Activated CD8-positive, alpha-beta T cell treated with anti-CD3 and anti-CD28 coated beads for 36 hours (primary cell): ENCODE measurements at regions of chr12 and their contacts with region 1.

Region 1: GRCh38 chr12:17853054-17853453 is 236.9 kb downstream of the RERGL start:
- DNase-seq: no peak
- ATAC-seq: no peak
- H3K4me3 Mint-ChIP-seq: no peak overlapping the region
- H3K27ac Mint-ChIP-seq: no peak overlapping the region
- H3K4me1 Mint-ChIP-seq: no peaks in the 10 kb centered on the region
- H3K27me3 Mint-ChIP-seq: no peaks in the 10 kb centered on the region
- CTCF ChIP-seq: no peak

Region 2: DNA sequence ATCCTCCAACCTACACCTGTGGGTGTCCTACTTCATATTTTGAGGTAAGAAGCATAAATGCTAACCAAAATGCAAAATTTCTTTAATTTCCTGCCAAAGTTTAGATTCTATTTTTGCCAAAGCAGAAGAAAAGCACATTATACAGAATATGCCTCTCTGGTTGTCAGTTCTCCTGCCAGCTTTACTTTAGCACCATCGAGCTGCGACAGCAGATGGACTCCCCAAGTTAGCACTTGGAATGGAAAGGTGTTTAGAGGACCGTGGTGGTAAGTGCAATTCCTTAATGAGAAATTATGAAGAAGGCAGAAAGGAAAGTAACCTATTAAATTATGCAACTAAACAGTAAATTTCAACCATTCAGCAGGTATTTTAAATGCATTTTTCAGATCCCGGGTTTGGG is 89.7 kb before region 1 on chr12:
- CTCF ChIA-PET with region 1: no interaction called
- POLR2A ChIA-PET with region 1: no interaction called
- intact Hi-C with region 1: loop called (anchors 5 kb)
- DNase-seq: no peak
- ATAC-seq: no peak
- H3K4me3 Mint-ChIP-seq: no peak overlapping the region
- H3K27ac Mint-ChIP-seq: no peak overlapping the region
- H3K4me1 Mint-ChIP-seq: no peaks in the 10 kb centered on the region
- H3K27me3 Mint-ChIP-seq: no peaks in the 10 kb centered on the region
- CTCF ChIP-seq: no peak

Region 3: DNA sequence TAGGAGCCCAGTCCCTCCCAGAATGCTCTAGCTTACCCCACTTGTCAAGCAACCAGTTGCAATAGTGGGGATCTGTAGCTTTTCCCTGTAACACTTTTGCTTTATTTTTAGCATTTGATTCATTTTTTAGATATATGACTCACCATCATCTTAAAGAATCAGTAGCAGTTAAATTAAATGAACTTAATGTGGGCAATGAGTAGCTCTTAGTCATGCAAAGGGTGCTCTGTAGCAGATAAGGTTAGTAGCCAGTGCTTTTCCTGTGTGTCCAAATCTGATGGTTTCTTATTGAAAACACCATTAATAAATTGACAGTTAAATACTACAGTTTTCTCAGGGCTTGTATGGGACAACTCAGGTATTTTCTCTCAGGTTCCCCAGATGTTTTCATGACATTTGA is 74.8 kb before region 1 on chr12:
- CTCF ChIA-PET with region 1: no interaction called
- POLR2A ChIA-PET with region 1: no interaction called
- intact Hi-C with region 1: no loop called
- DNase-seq: no peak
- ATAC-seq: no peak
- H3K4me3 Mint-ChIP-seq: no peak overlapping the region
- H3K27ac Mint-ChIP-seq: no peak overlapping the region
- H3K4me1 Mint-ChIP-seq: no peaks in the 10 kb centered on the region
- H3K27me3 Mint-ChIP-seq: no peaks in the 10 kb centered on the region
- CTCF ChIP-seq: no peak

Region 4: DNA sequence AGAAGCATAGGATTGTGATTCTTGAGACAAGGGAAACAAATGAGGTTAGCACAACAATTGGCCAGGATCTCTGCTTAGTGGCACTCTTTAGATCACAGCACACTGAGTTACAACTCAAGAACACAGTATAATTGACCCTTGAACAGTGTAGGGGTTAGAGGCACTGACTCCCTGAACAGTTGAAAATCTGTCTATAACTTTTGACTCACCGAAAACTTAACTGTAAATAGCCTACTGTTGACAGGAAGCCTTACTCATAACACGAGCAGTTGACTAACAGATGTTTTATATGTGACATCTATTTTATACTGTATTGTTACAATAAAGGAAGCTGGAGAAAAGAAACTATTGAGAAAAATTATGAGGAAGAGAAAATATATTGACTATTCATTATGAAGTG is 59.2 kb before region 1 on chr12:
- CTCF ChIA-PET with region 1: no interaction called
- POLR2A ChIA-PET with region 1: no interaction called
- intact Hi-C with region 1: no loop called
- DNase-seq: no peak
- ATAC-seq: no peak
- H3K4me3 Mint-ChIP-seq: no peak overlapping the region
- H3K27ac Mint-ChIP-seq: no peak overlapping the region
- H3K4me1 Mint-ChIP-seq: no peaks in the 10 kb centered on the region
- H3K27me3 Mint-ChIP-seq: no peaks in the 10 kb centered on the region
- CTCF ChIP-seq: no peak